Heart right ventricle (tissue), 16 donors: ENCODE measurements at regions of chr12 and their contacts with region 1.

Region 1: GRCh38 chr12:94649349-94650142 is 811 bp downstream of the TMCC3 start:
- DNase-seq: peak; percentile 36 to 63
- ATAC-seq: peak; percentile 69 to 88 (median 76)
- H3K4me3 ChIP-seq: peak overlapping the region; percentile 24 to 81 (median 68)
- H3K27ac ChIP-seq: peak overlapping the region; percentile 30 to 86 (median 72)
- H3K4me1 ChIP-seq: peaks cover 0 to 24% (median 8%) of the 10 kb centered on the region in 9 donors
- H3K27me3 ChIP-seq: peaks cover 0 to 36% (median 0%) of the 10 kb centered on the region in 7 donors
- CTCF ChIP-seq: peak in 8 of 9 donors; percentile 18 to 66 (median 49)

Region 2: GRCh38 chr12:94586589-94587259 is 62.8 kb before region 1 on chr12:
- intact Hi-C with region 1: loop called in 3 of 10 experiments (anchors 5 to 10 kb)
- DNase-seq: no peak
- ATAC-seq: peak in 4 of 8 donors; percentile 17 to 39 (median 31)
- H3K4me3 ChIP-seq: no peak overlapping the region
- H3K27ac ChIP-seq: peak overlapping the region in 9 of 10 donors; percentile 25 to 89 (median 72)
- H3K4me1 ChIP-seq: peaks cover 0 to 40% (median 16%) of the 10 kb centered on the region in 9 donors
- H3K27me3 ChIP-seq: peaks cover 0 to 4% (median 0%) of the 10 kb centered on the region in 7 donors
- CTCF ChIP-seq: no peak

Region 3: DNA sequence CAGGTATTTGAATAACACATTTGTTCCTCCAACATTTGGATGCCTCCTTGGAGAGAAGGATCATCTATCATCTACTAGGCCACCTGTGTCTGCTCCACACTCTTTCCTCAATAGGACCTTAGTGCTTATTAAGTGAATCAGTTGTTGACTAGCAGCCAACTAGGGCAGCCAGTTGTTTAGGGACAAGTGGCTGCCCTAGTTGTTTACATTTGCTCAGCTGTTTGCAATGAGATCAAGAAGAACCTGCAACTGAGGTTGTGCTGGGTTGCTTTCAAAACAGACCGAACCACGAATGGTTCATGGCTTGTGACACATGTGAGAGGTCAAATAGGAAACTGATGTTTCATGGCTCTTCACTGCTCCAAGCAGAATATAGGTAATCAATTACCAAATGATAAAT is 53.0 kb before region 1 on chr12:
- intact Hi-C with region 1: loop called in 1 of 10 experiments (anchors 10 kb)
- DNase-seq: no peak
- ATAC-seq: no peak
- H3K4me3 ChIP-seq: no peak overlapping the region
- H3K27ac ChIP-seq: no peak overlapping the region
- H3K4me1 ChIP-seq: peaks cover 0 to 34% (median 15%) of the 10 kb centered on the region in 9 donors
- H3K27me3 ChIP-seq: no peaks in the 10 kb centered on the region
- CTCF ChIP-seq: no peak

Region 4: DNA sequence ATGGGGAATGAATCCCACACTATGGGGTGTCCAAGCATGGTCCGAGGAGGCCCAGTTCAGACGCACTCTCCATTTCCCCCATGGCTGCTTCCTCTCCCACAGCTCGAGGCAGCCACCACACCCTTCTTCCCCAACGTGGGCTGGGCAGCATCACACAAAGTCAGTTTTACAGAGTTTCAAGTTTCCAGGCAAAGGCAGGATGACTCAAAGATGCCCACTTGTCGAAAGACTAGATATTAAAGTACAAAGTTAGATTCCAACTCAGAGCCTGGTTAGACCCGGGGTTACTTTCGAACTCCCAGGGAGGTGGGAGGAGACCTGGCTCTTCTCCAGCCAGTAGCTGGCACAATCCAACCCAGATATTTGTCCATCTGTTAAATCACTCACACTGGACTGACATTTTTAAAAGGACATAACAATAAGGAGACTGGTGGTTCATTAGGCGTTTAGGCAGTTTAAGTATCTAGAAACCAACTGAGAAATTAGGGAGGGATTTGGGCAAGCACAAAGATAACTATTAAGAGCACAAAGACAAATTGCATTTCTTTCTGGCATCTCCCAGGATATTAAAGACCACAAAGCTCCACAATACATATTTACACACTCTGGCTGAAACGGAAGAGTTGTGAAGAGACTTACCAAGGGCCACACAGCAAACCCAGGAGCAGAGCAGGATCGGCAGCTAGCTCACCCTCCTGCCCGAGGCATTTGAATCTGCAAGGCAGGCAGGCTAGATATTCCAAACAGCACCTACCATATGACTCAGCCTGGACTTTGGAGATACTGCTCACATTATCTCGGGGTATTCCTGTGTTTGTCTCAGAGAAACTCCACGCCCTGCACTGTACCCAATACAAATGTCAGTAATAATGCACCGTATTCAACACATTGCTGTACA is 34.0 kb before region 1 on chr12:
- intact Hi-C with region 1: loop called in 1 of 10 experiments (anchors 5 kb)
- DNase-seq: peak; percentile 42 to 45
- ATAC-seq: peak; percentile 57 to 81 (median 74)
- H3K4me3 ChIP-seq: peak overlapping the region in 8 of 10 donors; percentile 1 to 32 (median 20)
- H3K27ac ChIP-seq: peak overlapping the region in 8 of 10 donors; percentile 31 to 60 (median 50)
- H3K4me1 ChIP-seq: peaks cover 6 to 34% (median 21%) of the 10 kb centered on the region in 9 donors
- H3K27me3 ChIP-seq: no peaks in the 10 kb centered on the region
- CTCF ChIP-seq: no peak

Region 5: GRCh38 chr12:94769047-94769420 is 119.5 kb after region 1 on chr12:
- intact Hi-C with region 1: no loop called
- DNase-seq: no peak
- ATAC-seq: no peak
- H3K4me3 ChIP-seq: no peak overlapping the region
- H3K27ac ChIP-seq: no peak overlapping the region
- H3K4me1 ChIP-seq: peaks cover 0 to 15% (median 0%) of the 10 kb centered on the region in 9 donors
- H3K27me3 ChIP-seq: peaks cover 0 to 4% (median 0%) of the 10 kb centered on the region in 7 donors
- CTCF ChIP-seq: no peak